Activated CD4-positive, alpha-beta memory T cell treated with anti-CD3 and anti-CD28 coated beads, Interleukin-2, amount 10 ng/mL, durations not matched to agents 7 days and 5 days (primary cell): ENCODE measurements at regions of chr7 and their contacts with region 1.

Region 1: DNA sequence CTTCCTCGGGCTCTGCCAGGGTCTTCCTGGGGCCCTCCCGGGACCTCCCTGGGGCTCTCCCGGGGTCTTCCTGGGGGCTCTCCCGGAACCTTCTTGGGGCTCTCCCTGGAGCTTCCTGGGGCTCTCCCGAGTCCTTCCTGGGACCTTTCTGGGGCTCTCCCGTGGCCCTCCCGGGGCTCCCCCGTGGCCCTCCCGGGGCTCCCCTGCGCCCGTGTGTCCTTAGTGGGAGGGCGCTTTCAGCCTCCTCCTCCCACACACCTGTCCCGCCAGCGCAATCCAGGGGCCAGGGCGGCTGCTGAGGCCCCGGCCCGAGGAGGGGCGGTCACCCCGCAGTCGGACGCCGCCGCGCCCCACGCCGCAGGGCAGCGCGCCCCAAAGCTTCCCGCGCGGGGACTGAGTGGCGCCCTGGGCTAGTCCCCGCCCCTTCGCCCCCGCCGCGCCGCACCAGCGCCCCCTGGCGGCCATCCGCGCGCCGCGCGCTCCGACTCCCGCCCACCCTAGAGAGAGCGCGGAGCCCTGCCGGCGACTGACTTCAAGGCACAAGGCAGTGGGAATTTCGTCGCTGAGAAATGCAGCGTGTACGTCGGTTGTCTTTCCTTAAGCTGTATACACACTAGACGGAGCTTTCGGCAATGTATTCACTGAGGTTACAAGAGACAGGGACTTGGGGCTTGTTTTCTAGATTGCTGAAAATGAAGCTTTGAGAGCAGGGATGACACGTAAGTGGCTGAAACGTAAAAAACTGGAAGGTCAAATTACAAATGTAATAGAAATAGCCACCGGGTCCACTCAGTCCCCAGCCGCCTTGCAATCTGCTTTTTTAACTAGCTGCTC is 47.1 kb downstream of the INSIG1 start:
- DNase-seq: peak; percentile 84
- H3K4me3 Mint-ChIP-seq: peak overlapping the region; percentile 28
- H3K27ac Mint-ChIP-seq: no peak overlapping the region
- H3K4me1 Mint-ChIP-seq: peaks cover 4% of the 10 kb centered on the region
- H3K27me3 Mint-ChIP-seq: peaks cover 27% of the 10 kb centered on the region

Region 2: DNA sequence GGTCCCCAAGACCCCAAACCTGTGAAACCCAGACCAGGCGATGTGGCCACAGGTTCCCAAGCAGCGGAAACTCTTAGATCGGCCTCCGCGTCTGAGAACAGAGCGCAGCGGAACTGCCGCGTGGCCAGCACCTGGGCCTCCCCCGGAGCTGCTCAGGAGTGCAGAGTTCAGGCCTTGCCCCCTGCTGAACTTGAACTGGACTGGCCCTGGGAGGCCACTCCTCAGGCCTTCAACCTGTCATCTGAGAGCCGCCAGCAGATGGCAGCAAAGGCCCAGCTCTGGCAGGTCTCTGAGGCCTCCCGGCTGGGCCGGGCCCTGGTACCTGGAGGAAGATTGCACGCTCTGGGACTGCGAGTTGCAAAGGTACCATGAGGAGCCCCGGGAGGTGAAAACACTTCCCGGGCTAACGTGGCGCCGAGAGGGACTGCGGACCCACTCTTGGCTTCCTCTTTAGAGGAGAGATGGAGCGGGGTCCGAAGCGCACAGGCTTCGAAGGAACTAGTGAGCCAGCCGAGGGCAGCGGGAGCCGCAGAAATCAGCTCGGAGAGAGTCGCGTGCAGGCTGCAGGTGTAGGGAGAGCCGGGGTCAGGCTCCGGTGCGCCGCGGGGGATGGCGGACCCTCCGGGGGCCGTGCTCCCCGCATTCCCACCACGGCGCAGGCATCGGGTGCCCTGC is 431.0 kb before region 1 on chr7:
- CTCF ChIA-PET with region 1: interaction called, 15 read pairs
- POLR2A ChIA-PET with region 1: no interaction called
- DNase-seq: peak; percentile 86
- H3K4me3 Mint-ChIP-seq: peak overlapping the region; percentile 17
- H3K27ac Mint-ChIP-seq: no peak overlapping the region
- H3K4me1 Mint-ChIP-seq: peaks cover 5% of the 10 kb centered on the region
- H3K27me3 Mint-ChIP-seq: peaks cover 12% of the 10 kb centered on the region

Region 3: GRCh38 chr7:155190688-155191087 is 154.1 kb before region 1 on chr7:
- CTCF ChIA-PET with region 1: interaction called, 31 read pairs
- POLR2A ChIA-PET with region 1: interaction called, 4 read pairs
- DNase-seq: peak; percentile 72
- H3K4me3 Mint-ChIP-seq: no peak overlapping the region
- H3K27ac Mint-ChIP-seq: no peak overlapping the region
- H3K4me1 Mint-ChIP-seq: peaks cover 42% of the 10 kb centered on the region
- H3K27me3 Mint-ChIP-seq: peaks cover 1% of the 10 kb centered on the region

Region 4: GRCh38 chr7:155205368-155206317 is 139.2 kb before region 1 on chr7:
- CTCF ChIA-PET with region 1: interaction called, 12 read pairs
- POLR2A ChIA-PET with region 1: interaction called, 4 read pairs
- DNase-seq: peak; percentile 94
- H3K4me3 Mint-ChIP-seq: peak overlapping the region; percentile 88
- H3K27ac Mint-ChIP-seq: peak overlapping the region; percentile 99
- H3K4me1 Mint-ChIP-seq: peaks cover 44% of the 10 kb centered on the region
- H3K27me3 Mint-ChIP-seq: no peaks in the 10 kb centered on the region

Region 5: GRCh38 chr7:155312633-155313032 is 32.2 kb before region 1 on chr7:
- CTCF ChIA-PET with region 1: interaction called, 12 read pairs
- POLR2A ChIA-PET with region 1: no interaction called
- DNase-seq: no peak
- H3K4me3 Mint-ChIP-seq: no peak overlapping the region
- H3K27ac Mint-ChIP-seq: no peak overlapping the region
- H3K4me1 Mint-ChIP-seq: peaks cover 4% of the 10 kb centered on the region
- H3K27me3 Mint-ChIP-seq: peaks cover 3% of the 10 kb centered on the region

Region 6: GRCh38 chr7:155774947-155775346 is 430.1 kb after region 1 on chr7:
- CTCF ChIA-PET with region 1: no interaction called
- POLR2A ChIA-PET with region 1: no interaction called
- DNase-seq: no peak
- H3K4me3 Mint-ChIP-seq: no peak overlapping the region
- H3K27ac Mint-ChIP-seq: no peak overlapping the region
- H3K4me1 Mint-ChIP-seq: no peaks in the 10 kb centered on the region
- H3K27me3 Mint-ChIP-seq: no peaks in the 10 kb centered on the region